ENCODE measurements at regions of chr20 and their contacts with region 1.

Region 1: GRCh38 chr20:37270576-37271420 is 9.2 kb upstream of the GHRH start:
- DNase-seq: no peak
- ATAC-seq: no peak
- H3K4me3 Mint-ChIP-seq: no peak overlapping the region
- H3K27ac Mint-ChIP-seq: no peak overlapping the region
- H3K4me1 Mint-ChIP-seq: no peaks in the 10 kb centered on the region
- H3K27me3 Mint-ChIP-seq: peaks cover 2% of the 10 kb centered on the region

Region 2: GRCh38 chr20:37316116-37316774 is 45.4 kb after region 1 on chr20:
- CTCF ChIA-PET with region 1: no interaction called
- POLR2A ChIA-PET with region 1: no interaction called
- intact Hi-C with region 1: no loop called
- DNase-seq: peak; percentile 38
- ATAC-seq: peak; percentile 78
- H3K4me3 Mint-ChIP-seq: no peak overlapping the region
- H3K27ac Mint-ChIP-seq: peak overlapping the region; percentile 26
- H3K4me1 Mint-ChIP-seq: peaks cover 24% of the 10 kb centered on the region
- H3K27me3 Mint-ChIP-seq: no peaks in the 10 kb centered on the region

Region 3: DNA sequence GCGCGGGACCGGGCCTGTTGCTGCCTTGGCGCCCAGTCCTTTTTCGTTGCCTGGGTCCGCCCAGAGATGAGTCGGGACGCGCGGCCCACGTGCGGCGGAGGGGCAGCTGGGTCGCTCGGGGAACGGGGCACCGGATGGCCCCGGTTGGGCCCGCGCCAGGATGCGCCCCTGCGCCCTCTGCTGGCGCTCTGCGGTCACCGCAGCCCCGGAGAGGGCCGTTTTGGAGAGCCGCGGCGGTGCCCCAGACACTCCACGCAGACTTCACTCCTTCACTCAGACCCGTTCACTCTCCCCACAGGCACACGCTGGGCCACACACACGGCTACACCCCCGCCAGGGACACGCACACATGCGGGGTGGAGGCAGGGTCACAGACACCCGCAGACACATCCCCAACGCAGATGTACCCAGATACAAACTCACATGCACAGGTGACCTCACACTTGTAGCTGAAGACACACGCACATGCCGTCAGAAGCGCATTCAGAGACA is 113.9 kb after region 1 on chr20:
- CTCF ChIA-PET with region 1: interaction called, 24 read pairs
- POLR2A ChIA-PET with region 1: no interaction called
- intact Hi-C with region 1: loop called (anchors 1 kb)
- DNase-seq: peak; percentile 86
- ATAC-seq: peak; percentile 94
- H3K4me3 Mint-ChIP-seq: peak overlapping the region; percentile 59
- H3K27ac Mint-ChIP-seq: peak overlapping the region; percentile 43
- H3K4me1 Mint-ChIP-seq: peaks cover 8% of the 10 kb centered on the region
- H3K27me3 Mint-ChIP-seq: peaks cover 4% of the 10 kb centered on the region

Region 4: GRCh38 chr20:37556538-37556937 is 285.7 kb after region 1 on chr20:
- CTCF ChIA-PET with region 1: no interaction called
- POLR2A ChIA-PET with region 1: no interaction called
- intact Hi-C with region 1: no loop called
- DNase-seq: no peak
- ATAC-seq: no peak
- H3K4me3 Mint-ChIP-seq: no peak overlapping the region
- H3K27ac Mint-ChIP-seq: no peak overlapping the region
- H3K4me1 Mint-ChIP-seq: peaks cover 5% of the 10 kb centered on the region
- H3K27me3 Mint-ChIP-seq: peaks cover 14% of the 10 kb centered on the region

Measured in activated CD4-positive, alpha-beta T cell treated with anti-CD3 and anti-CD28 coated beads for 36 hours (primary cell).